Left lung (tissue), 14 donors: ENCODE measurements at regions of chr6 and their contacts with region 1.

Region 1: DNA sequence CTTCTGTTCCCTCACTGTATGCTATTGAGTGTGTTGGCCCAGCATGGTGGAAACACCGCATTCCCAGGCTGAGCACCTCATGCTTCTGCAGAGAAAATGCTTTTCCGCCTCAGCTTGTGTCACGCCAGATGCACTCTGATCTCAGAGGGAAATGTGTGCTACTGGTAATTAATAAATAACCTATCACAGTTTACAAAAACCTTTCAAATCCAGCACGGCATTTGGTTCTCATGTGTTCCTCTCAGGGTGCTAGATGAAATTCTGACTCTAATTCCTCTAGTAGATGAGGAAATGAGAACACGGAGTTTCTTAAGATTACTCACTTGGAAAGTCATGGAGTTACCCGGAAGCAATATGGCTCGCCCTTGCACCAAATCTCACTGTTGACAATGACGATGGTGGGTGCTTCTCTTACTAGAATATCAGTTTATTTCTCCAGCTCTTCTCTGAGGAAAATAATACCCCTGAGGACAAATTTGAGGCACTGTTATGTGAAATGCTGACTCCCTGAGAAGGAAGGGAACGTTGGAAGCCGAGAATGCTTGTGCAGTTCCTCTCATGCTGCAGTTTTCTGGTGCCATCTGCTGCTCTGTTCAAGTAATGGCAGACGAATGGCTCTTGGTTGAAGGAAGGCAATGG is 116.6 kb downstream of the RNF144B start:
- DNase-seq: peak in 3 of 4 donors; percentile 58 to 74 (median 61)
- ATAC-seq: peak; percentile 95
- H3K4me3 ChIP-seq: peak overlapping the region; percentile 16 to 18
- H3K27ac ChIP-seq: peak overlapping the region; percentile 21 to 74
- H3K4me1 ChIP-seq: peaks cover 7 to 29% of the 10 kb centered on the region in 2 donors
- H3K27me3 ChIP-seq: no peaks in the 10 kb centered on the region
- CTCF ChIP-seq: peak; percentile 80 to 83

Region 2: GRCh38 chr6:18323935-18324705 is 179.6 kb before region 1 on chr6:
- intact Hi-C with region 1: loop called in 1 of 2 experiments (anchors 2 kb)
- DNase-seq: peak in 2 of 4 donors; percentile 28 to 48
- ATAC-seq: peak; percentile 84
- H3K4me3 ChIP-seq: no peak overlapping the region
- H3K27ac ChIP-seq: no peak overlapping the region
- H3K4me1 ChIP-seq: peaks cover 5 to 41% of the 10 kb centered on the region in 2 donors
- H3K27me3 ChIP-seq: no peaks in the 10 kb centered on the region
- CTCF ChIP-seq: peak; percentile 61 to 74

Region 3: DNA sequence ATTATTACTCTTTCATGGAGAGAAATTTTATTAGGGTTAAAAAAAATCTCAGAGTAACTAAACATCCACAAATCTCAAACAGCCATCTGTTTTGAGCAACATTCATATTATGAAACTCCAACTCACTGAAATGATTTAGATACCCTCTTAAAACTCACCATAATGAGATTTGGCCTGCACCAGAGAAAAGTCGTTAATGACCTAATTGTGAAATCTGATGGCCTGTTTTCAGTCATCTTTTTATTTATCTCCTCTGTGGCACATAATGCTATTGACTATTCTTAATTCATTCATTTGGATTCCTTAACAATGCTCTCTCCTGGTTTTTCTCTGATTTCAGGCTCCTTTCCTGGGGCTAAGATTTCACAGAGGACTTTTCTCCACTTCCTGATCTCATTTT is 76.2 kb after region 1 on chr6:
- intact Hi-C with region 1: no loop called
- DNase-seq: no peak
- ATAC-seq: no peak
- H3K4me3 ChIP-seq: no peak overlapping the region
- H3K27ac ChIP-seq: no peak overlapping the region
- H3K4me1 ChIP-seq: no peaks in the 10 kb centered on the region
- H3K27me3 ChIP-seq: no peaks in the 10 kb centered on the region
- CTCF ChIP-seq: no peak